Spleen (tissue), 13 donors: ENCODE measurements at regions of chr6 and their contacts with region 1.

Region 1: GRCh38 chr6:163533443-163533842 is 118.9 kb downstream of the QKI start:
- DNase-seq: no peak
- H3K4me3 ChIP-seq: no peak overlapping the region
- H3K27ac ChIP-seq: no peak overlapping the region
- H3K4me1 ChIP-seq: peaks cover 25 to 85% (median 56%) of the 10 kb centered on the region in 6 donors
- H3K27me3 ChIP-seq: no peaks in the 10 kb centered on the region
- CTCF ChIP-seq: no peak
- POLR2A ChIP-seq: no peak

Region 2: GRCh38 chr6:163489584-163489983 is 43.9 kb before region 1 on chr6:
- intact Hi-C with region 1: loop called (anchors 10 kb)
- DNase-seq: no peak
- H3K4me3 ChIP-seq: no peak overlapping the region
- H3K27ac ChIP-seq: peak overlapping the region in 1 of 8 donors; percentile 55
- H3K4me1 ChIP-seq: peaks cover 18 to 92% (median 52%) of the 10 kb centered on the region in 6 donors
- H3K27me3 ChIP-seq: no peaks in the 10 kb centered on the region
- CTCF ChIP-seq: no peak
- POLR2A ChIP-seq: no peak

Region 3: GRCh38 chr6:163585932-163586437 is 52.5 kb after region 1 on chr6:
- intact Hi-C with region 1: no loop called
- DNase-seq: no peak
- H3K4me3 ChIP-seq: no peak overlapping the region
- H3K27ac ChIP-seq: no peak overlapping the region
- H3K4me1 ChIP-seq: peaks cover 0 to 23% (median 8%) of the 10 kb centered on the region in 6 donors
- H3K27me3 ChIP-seq: no peaks in the 10 kb centered on the region
- CTCF ChIP-seq: no peak
- POLR2A ChIP-seq: no peak